ENCODE measurements at regions of chr17 and their contacts with region 1.

Region 1: DNA sequence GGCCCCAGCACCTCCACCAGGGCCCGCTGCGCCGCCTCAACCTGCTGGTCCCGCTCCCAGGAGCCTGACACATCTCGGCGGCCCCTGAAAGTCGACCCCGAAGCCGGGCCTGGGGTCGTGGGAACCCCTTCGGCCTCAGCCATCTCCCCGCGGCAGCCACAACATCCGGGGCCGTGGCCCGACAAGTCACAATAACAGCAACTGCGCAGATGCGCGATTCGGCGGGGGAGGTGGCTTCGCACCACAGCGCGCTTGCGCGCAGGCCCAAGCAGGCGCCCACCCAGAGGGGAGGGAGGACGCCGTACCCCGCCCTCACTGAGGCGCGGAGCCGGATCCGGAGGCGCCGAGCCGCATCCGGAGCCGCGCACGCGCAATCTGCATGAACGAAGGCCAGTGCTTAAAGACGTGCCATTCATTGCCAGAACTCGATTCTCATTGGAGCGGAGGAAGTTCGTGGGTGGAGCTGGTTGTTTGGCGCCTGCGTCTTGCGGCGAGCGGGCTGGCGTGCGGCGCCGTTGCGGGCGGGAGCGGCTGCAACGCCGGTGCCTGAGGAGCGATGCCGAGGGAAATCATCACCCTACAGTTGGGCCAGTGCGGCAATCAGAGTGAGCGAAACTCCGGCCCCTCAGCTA is at the starts of genes RETREG3 and TUBG1:
- DNase-seq: peak; percentile 99
- ATAC-seq: peak; percentile 90
- H3K4me3 ChIP-seq: peak within 1 kb of the TSS; percentile 95
- H3K27ac ChIP-seq: peak within 1 kb of the TSS; percentile 84
- H3K4me1 ChIP-seq: peaks cover 16 to 21% of the 10 kb centered on the region in 2 experiments; a peak in 4 of 5 replicates
- H3K27me3 ChIP-seq: no peaks in the 10 kb centered on the region
- CTCF ChIP-seq: peak; percentile 40 to 67 (median 46); a peak in 5 of 6 replicates
- EP300 ChIP-seq: no peak
- POLR2A ChIP-seq: peak; percentile 90
- RAD21 ChIP-seq: peak in 1 of 2 experiments; percentile 32; a peak in 2 of 4 replicates
- polyA plus RNA-seq, gene RETREG3: 4.1 to 5.3 TPM
- polyA plus RNA-seq, gene TUBG1: 33.1 to 66.0 TPM

Region 2: GRCh38 chr17:42312285-42313130 is 296.8 kb before region 1 on chr17:
- CTCF ChIA-PET with region 1: no interaction called
- POLR2A ChIA-PET with region 1: no interaction called
- in situ Hi-C with region 1: no loop called
- intact Hi-C with region 1: no loop called
- DNase-seq: peak; percentile 89 to 97 (median 91)
- ATAC-seq: peak; percentile 69
- H3K4me3 ChIP-seq: peak overlapping the region; percentile 13
- H3K27ac ChIP-seq: peak overlapping the region; percentile 100
- H3K4me1 ChIP-seq: peaks cover 81 to 89% of the 10 kb centered on the region in 2 experiments
- H3K27me3 ChIP-seq: no peaks in the 10 kb centered on the region
- CTCF ChIP-seq: peak; percentile 69 to 81 (median 70)
- EP300 ChIP-seq: peak; percentile 96
- POLR2A ChIP-seq: peak; percentile 86
- RAD21 ChIP-seq: peak; percentile 60 to 71

Region 3: DNA sequence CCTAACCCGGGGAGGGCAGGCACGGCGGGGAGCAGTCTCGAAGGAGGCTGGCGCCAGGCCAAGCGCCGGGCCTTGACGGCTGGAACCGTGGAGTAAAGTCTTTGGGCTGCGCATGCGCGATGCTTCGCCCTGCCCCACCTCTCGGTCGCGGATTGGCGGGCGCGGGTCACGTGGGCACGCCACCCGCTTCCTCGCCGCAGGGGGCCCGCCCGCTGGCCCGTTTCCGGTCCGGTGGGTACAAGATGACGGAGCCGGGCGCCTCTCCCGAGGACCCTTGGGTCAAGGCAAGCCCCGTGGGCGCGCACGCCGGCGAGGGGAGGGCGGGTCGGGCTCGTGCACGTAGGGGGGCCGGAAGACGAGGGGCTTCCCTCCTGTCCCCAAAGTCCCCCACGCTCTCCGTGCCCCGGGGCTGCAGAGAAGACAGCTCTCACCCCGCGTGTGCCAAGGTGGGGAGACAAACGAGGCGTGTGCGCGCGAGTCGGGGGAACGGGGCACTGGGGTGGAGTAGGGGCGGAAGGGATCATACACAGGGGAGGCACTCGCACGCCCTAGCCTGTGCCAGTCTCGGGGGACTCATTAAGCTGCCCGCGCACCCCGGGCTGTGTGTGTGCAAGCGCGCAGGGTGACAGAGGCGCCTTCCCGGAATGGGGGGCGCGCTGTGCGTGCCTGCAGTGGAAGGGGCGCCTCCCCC is 42.3 kb before region 1 on chr17 and contains the start of gene MLX:
- CTCF ChIA-PET with region 1: no interaction called
- POLR2A ChIA-PET with region 1: no interaction called
- in situ Hi-C with region 1: no loop called
- intact Hi-C with region 1: no loop called
- DNase-seq: peak; percentile 97 to 100 (median 100)
- ATAC-seq: peak; percentile 73
- H3K4me3 ChIP-seq: peak within 1 kb of the TSS; percentile 82
- H3K27ac ChIP-seq: peak within 1 kb of the TSS; percentile 89
- H3K4me1 ChIP-seq: peaks cover 32 to 60% of the 10 kb centered on the region in 2 experiments
- H3K27me3 ChIP-seq: no peaks in the 10 kb centered on the region
- CTCF ChIP-seq: no peak
- EP300 ChIP-seq: no peak
- POLR2A ChIP-seq: peak; percentile 53; the same call in 1 of the 2 replicates
- RAD21 ChIP-seq: no peak
- polyA plus RNA-seq, gene MLX: 82.7 to 100 TPM

Region 4: DNA sequence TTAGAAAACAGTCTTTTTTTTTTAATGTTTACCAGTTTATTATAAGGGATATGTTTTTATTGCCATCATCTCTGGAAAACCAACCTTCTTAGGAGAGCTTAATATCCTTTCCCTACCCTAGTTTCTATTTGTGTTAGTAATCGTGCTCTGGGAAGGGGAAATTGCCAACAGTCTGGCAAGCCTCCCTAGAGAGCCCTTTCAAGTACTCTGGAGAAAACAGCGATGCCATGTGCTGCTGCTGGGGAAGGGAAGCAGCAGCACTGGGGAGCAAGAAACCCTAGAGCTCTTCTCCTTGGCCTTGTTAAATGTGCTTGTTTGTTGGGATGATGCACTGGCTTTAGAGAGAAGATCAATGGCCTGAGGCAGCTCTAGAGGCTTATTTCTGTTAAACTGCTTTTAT is 10.4 kb before region 1 on chr17:
- CTCF ChIA-PET with region 1: no interaction called
- POLR2A ChIA-PET with region 1: interaction called, 15 read pairs
- in situ Hi-C with region 1: no loop called
- intact Hi-C with region 1: no loop called
- DNase-seq: no peak
- ATAC-seq: no peak
- H3K4me3 ChIP-seq: no peak overlapping the region
- H3K27ac ChIP-seq: no peak overlapping the region
- H3K4me1 ChIP-seq: no peaks in the 10 kb centered on the region; a peak in 1 of 5 replicates
- H3K27me3 ChIP-seq: no peaks in the 10 kb centered on the region
- CTCF ChIP-seq: no peak
- EP300 ChIP-seq: no peak
- POLR2A ChIP-seq: no peak
- RAD21 ChIP-seq: no peak

Region 5: DNA sequence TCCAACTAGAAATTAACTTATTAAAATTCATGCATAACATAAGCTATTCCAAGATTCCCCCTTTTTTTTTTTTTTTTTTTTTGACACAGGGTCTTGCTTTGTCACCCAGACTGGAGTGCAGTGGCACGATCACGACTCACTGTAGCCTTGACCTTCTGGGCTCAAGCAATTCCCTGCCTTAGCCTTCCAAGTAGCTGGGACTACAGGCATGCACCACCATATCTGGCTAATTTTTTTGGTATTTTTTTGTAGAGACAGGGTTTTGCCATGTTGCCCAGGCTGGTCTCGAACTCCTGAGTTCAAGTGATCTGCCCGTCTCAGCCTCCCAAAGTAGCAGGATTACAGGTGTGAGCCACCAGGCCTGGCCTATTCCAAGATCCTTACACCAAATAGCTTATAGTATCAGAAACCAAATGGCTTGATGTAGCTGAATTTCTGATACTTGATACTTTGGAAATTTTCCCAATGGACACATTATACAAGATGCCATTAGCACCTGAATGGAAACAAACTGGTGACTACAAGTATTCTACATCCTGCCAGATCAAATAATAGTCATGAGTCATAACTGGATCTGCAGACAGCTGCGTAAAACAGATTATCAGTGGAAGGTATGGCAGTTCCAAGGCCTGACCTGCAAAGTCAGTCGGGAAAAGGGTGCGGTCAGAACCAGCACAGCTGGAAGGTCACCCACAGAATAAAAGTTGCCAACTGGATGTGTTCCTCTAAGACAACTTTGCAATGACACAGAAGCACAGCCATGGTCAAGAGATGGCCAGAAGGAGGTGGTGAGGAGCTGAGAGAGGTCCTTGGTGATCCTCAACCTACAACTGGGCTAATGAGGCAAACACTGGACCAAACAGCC is 14.7 kb after region 1 on chr17:
- CTCF ChIA-PET with region 1: interaction called, 3 read pairs
- POLR2A ChIA-PET with region 1: interaction called, 31 read pairs
- in situ Hi-C with region 1: no loop called
- intact Hi-C with region 1: no loop called
- DNase-seq: peak; percentile 72 to 91 (median 80)
- ATAC-seq: peak; percentile 84
- H3K4me3 ChIP-seq: no peak overlapping the region
- H3K27ac ChIP-seq: peak overlapping the region; percentile 79
- H3K4me1 ChIP-seq: peaks cover 36 to 53% of the 10 kb centered on the region in 2 experiments; a peak in 4 of 5 replicates
- H3K27me3 ChIP-seq: no peaks in the 10 kb centered on the region
- CTCF ChIP-seq: peak; percentile 46 to 62 (median 58); a peak in 5 of 6 replicates
- EP300 ChIP-seq: peak; percentile 91
- POLR2A ChIP-seq: no peak
- RAD21 ChIP-seq: peak; percentile 20 to 62; a peak in 2 of 4 replicates

Region 6: DNA sequence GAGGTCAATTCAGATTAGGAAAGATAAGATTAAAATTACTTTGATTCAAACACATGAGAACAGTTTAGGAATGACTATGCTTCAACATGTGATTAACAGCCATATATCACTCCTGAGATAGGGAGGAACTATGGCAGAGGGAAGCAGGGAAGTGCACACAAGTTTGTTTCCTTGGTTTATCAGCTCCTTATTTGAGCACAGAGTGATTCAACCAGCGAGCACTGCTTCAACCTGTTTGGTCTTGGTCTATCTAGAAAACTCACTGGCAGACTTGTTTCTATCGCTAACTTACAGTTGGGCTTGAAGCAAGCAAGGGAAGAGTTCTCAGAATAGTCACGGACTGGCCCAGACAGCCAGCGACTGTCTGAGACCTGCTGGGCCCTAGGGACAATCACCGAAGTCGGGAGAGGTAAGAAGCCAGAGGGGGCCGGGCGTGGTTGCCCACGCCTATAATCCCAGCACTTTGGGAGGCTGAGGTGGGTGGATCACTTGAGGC is 23.7 kb after region 1 on chr17:
- CTCF ChIA-PET with region 1: no interaction called
- POLR2A ChIA-PET with region 1: interaction called, 10 read pairs
- in situ Hi-C with region 1: no loop called
- intact Hi-C with region 1: no loop called
- DNase-seq: peak; percentile 64 to 90 (median 71)
- ATAC-seq: peak; percentile 95
- H3K4me3 ChIP-seq: no peak overlapping the region; the same call in 1 of the 2 replicates
- H3K27ac ChIP-seq: peak overlapping the region; percentile 63; the same call in 2 of the 3 replicates
- H3K4me1 ChIP-seq: peaks cover 10 to 28% of the 10 kb centered on the region in 2 experiments
- H3K27me3 ChIP-seq: no peaks in the 10 kb centered on the region
- CTCF ChIP-seq: no peak
- EP300 ChIP-seq: peak; percentile 75; the same call in 1 of the 2 replicates
- POLR2A ChIP-seq: no peak
- RAD21 ChIP-seq: peak in 1 of 2 experiments; percentile 11; a peak in 1 of 4 replicates

Region 7: DNA sequence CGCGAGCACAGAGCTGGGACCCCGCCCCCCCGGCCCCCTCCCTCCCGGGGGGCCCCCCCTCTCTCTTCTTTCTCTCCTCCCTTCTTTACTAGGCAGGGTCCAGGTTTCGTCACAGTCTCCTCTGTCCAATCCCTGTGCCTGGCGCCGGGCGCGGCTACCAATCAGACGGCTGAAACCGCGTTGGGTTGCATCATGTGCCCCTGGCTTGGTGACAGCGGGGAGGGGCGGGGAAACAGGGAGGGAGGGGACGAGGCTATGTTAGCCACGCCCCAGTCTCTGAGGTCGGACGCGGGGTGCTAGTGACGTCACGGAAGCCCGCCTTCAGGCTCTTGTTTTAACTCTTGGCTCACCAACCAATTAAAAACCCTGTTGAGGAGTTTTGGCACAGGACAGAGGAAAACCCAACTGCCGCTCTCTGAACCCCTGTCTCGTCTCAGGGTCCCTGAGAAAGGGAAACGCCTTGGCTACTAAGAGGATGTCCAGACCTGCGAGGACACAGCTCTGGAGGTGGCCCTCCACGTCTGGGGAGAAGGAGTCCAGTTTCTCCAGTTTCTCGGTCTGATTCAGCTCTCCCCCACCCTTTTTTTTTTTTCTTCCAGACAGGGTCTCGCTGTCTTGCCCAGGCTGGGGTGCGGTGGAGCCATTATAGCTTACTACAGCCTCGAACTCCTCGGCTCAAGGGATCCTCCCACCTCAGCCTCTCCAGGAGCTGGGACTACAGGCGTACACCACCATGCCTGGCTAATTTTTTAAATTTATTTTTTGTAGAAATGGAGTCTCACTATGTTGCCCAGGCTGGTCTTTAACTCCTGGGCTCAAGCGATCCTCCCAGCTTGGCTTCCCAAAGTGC is 67.9 kb after region 1 on chr17:
- CTCF ChIA-PET with region 1: interaction called, 4 read pairs
- POLR2A ChIA-PET with region 1: interaction called, 6 read pairs
- in situ Hi-C with region 1: no loop called
- intact Hi-C with region 1: loop called (anchors 5 kb)
- DNase-seq: peak; percentile 95 to 100 (median 98)
- ATAC-seq: peak; percentile 79
- H3K4me3 ChIP-seq: peak overlapping the region; percentile 61
- H3K27ac ChIP-seq: peak overlapping the region; percentile 95
- H3K4me1 ChIP-seq: peaks cover 42 to 75% of the 10 kb centered on the region in 2 experiments
- H3K27me3 ChIP-seq: no peaks in the 10 kb centered on the region
- CTCF ChIP-seq: no peak
- EP300 ChIP-seq: no peak
- POLR2A ChIP-seq: no peak
- RAD21 ChIP-seq: no peak

Region 8: GRCh38 chr17:42720996-42721583 is 111.8 kb after region 1 on chr17:
- CTCF ChIA-PET with region 1: no interaction called
- POLR2A ChIA-PET with region 1: no interaction called
- in situ Hi-C with region 1: no loop called
- intact Hi-C with region 1: no loop called
- DNase-seq: peak; percentile 60 to 81 (median 62)
- ATAC-seq: peak; percentile 90
- H3K4me3 ChIP-seq: no peak overlapping the region
- H3K27ac ChIP-seq: no peak overlapping the region
- H3K4me1 ChIP-seq: no peaks in the 10 kb centered on the region
- H3K27me3 ChIP-seq: no peaks in the 10 kb centered on the region
- CTCF ChIP-seq: peak; percentile 77 to 90 (median 81)
- EP300 ChIP-seq: peak; percentile 14; the same call in 1 of the 2 replicates
- POLR2A ChIP-seq: no peak
- RAD21 ChIP-seq: peak; percentile 88 to 96

Region 9: DNA sequence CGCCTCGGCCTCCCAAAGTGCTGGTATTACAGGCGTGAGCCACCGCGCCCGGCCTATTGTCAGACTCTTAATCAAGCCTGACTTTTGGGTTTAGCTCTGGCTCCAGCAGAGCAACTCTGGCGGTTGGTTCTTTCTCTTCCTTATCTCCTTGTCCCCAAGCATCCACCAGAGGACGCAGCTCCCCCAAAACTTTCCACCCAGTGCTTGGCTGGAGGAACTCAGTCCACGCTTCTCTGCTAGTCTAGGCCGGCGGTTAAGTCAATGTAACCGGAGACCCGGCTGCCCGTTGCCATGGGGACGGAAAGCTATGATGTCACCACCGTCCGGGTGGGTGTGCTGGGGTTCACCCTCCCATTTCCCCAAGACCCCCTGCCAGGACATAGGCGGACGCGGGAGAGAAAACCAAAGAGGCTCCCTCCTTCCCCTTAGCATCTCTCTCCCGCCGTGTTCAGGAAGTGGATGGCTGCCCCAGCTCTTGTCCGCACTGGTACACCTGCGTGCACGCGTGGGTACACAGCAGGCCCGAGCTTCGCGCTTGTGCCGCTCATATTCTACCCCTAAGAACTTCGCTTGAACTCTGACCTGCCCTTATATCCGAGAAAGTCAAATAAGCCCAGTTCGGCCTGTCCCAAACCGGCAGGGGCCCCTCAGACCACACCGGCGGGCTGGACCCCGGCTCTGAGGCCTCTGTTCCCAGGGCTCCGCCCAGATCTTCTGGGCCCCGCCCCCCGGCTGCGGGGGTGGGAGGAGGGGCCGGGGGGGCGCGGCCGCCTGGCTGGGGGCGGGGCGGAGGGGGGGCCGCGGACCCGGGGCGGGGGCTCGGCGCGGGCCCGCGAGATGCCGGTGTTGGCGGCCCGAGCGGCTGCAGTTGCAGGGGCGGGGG is 415.4 kb after region 1 on chr17 and contains the start of gene RND2:
- CTCF ChIA-PET with region 1: no interaction called
- POLR2A ChIA-PET with region 1: no interaction called
- in situ Hi-C with region 1: no loop called
- intact Hi-C with region 1: no loop called
- DNase-seq: peak; percentile 97 to 98 (median 97)
- ATAC-seq: peak; percentile 75
- H3K4me3 ChIP-seq: peak within 1 kb of the TSS; percentile 58
- H3K27ac ChIP-seq: peak within 1 kb of the TSS; percentile 92
- H3K4me1 ChIP-seq: peaks cover 13 to 66% of the 10 kb centered on the region in 2 experiments
- H3K27me3 ChIP-seq: no peaks in the 10 kb centered on the region
- CTCF ChIP-seq: peak; percentile 89 to 95 (median 90)
- EP300 ChIP-seq: peak; percentile 62
- POLR2A ChIP-seq: peak; percentile 84
- RAD21 ChIP-seq: peak; percentile 75 to 87
- polyA plus RNA-seq, gene RND2: 0.15 to 0.39 TPM